GM12878 (cell line): ENCODE measurements at regions of chr5 and their contacts with region 1.

Region 1: DNA sequence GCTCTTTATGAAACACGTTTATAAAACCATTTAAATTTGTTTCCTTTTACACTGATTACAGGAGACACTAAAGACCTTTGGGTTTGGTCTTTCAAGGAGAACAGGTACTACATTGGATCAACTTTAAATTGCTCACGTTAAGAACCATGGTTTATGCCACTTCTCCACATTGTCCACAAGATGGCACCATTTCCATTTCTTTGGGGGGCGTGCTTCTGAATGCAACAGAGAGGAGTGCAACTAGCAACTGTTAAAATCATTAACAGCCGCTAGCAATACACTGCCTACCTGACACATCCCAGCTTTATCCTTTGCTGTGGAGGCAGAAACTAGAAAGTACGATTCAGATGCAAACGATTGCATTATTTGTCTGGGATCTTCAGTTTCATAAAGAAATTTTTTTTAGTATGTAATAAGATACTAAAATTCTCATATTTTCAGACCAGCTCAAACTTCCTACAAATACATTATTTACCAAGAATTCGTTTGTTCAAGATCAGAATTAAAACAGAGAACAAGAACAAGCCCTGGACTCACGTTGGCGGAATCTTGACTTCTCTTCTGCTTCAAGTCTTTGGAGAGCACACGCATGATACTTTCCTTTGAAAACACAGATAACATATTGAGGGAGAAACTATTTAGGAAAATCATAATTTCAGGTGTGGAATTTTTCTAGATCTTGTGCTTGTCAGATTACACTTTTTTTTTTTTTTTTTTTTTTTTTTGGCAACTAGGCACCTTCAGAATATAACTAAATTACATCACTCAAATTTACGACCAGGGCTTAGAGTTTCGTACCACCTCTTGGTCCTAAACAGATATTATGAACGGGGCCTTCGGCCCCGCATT is 702 bp downstream of the CDC20B start:
- DNase-seq: peak; percentile 45
- ATAC-seq: peak; percentile 84
- H3K4me3 ChIP-seq: peak overlapping the region; percentile 69
- H3K27ac ChIP-seq: no peak overlapping the region
- H3K4me1 ChIP-seq: peaks cover 9% of the 10 kb centered on the region
- H3K27me3 ChIP-seq: peaks cover 3 to 22% of the 10 kb centered on the region in 2 experiments; a peak in 3 of 4 replicates
- CTCF ChIP-seq: peak; percentile 60 to 89 (median 82); a peak in 5 of 6 replicates
- EP300 ChIP-seq: no peak
- POLR2A ChIP-seq: no peak
- RAD21 ChIP-seq: peak; percentile 92

Region 2: GRCh38 chr5:55254802-55255201 is 82.5 kb after region 1 on chr5:
- CTCF ChIA-PET with region 1: no interaction called
- POLR2A ChIA-PET with region 1: no interaction called
- RAD21 ChIA-PET with region 1: no interaction called
- SMC1A ChIA-PET with region 1: no interaction called
- in situ Hi-C with region 1: no loop called
- intact Hi-C with region 1: loop called (anchors 5 kb)
- DNase-seq: no peak
- ATAC-seq: no peak
- H3K4me3 ChIP-seq: no peak overlapping the region
- H3K27ac ChIP-seq: no peak overlapping the region
- H3K4me1 ChIP-seq: no peaks in the 10 kb centered on the region
- H3K27me3 ChIP-seq: no peaks in the 10 kb centered on the region
- CTCF ChIP-seq: no peak
- EP300 ChIP-seq: no peak
- POLR2A ChIP-seq: no peak
- RAD21 ChIP-seq: no peak

Region 3: DNA sequence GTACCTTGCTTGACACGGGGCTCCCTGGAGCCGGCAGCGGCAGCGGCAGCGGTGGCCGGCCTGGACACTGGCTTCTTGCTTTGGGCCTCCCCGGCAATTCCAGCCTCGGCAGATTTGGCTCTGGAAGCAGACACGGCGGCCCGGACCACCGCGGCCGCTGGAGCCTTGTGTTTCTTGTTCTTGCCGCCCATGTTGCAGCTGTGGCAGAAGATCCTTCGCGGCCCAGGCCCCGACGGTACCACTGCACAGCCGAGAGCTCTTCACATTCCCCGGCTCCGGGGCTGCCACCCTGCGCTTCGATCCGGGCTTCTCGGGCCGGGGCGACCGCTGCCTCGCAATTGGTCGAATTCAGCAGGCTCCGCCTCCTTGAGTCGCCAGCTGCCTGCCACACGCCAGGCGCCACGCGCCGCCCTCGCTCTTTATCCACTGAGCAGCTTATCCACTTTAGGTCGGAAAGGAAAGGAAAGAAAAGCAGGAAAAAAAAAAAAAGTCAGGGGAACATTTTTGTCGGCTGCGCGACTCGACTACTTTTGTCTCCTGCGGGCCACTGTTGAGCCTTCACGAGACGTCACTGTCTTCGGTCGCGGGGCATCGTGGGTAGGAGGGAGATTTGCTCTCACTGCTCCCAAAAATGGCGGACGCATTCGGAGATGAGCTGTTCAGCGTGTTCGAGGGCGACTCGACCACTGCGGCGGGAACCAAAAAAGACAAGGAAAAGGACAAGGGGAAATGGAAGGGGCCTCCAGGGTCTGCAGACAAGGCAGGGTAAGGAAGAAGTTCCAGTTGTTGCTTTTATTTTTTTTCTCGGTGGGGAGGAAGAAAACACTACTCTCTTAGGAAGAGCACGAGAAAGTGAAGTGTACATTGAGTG is 135.3 kb after region 1 on chr5 and contains the starts of genes DHX29 and MTREX:
- CTCF ChIA-PET with region 1: interaction called, 5 read pairs
- POLR2A ChIA-PET with region 1: no interaction called
- RAD21 ChIA-PET with region 1: no interaction called
- SMC1A ChIA-PET with region 1: no interaction called
- in situ Hi-C with region 1: no loop called
- intact Hi-C with region 1: loop called (anchors 5 kb)
- DNase-seq: peak; percentile 63
- ATAC-seq: peak; percentile 94
- H3K4me3 ChIP-seq: peak within 1 kb of the TSS; percentile 85
- H3K27ac ChIP-seq: peak within 1 kb of the TSS; percentile 80
- H3K4me1 ChIP-seq: no peaks in the 10 kb centered on the region
- H3K27me3 ChIP-seq: no peaks in the 10 kb centered on the region
- CTCF ChIP-seq: no peak
- EP300 ChIP-seq: no peak
- POLR2A ChIP-seq: peak; percentile 98
- RAD21 ChIP-seq: no peak
- polyA plus RNA-seq, gene DHX29: 5.8 to 9.5 TPM
- polyA plus RNA-seq, gene MTREX: 20.1 to 26.1 TPM

Region 4: GRCh38 chr5:55480781-55481180 is 308.5 kb after region 1 on chr5:
- CTCF ChIA-PET with region 1: no interaction called
- POLR2A ChIA-PET with region 1: no interaction called
- RAD21 ChIA-PET with region 1: no interaction called
- SMC1A ChIA-PET with region 1: no interaction called
- in situ Hi-C with region 1: no loop called
- intact Hi-C with region 1: no loop called
- DNase-seq: no peak
- ATAC-seq: no peak
- H3K4me3 ChIP-seq: no peak overlapping the region
- H3K27ac ChIP-seq: no peak overlapping the region
- H3K4me1 ChIP-seq: no peaks in the 10 kb centered on the region
- H3K27me3 ChIP-seq: no peaks in the 10 kb centered on the region
- CTCF ChIP-seq: no peak
- EP300 ChIP-seq: no peak
- POLR2A ChIP-seq: no peak
- RAD21 ChIP-seq: no peak

Region 5: GRCh38 chr5:56190497-56190896 is 1018.2 kb after region 1 on chr5:
- CTCF ChIA-PET with region 1: no interaction called
- POLR2A ChIA-PET with region 1: no interaction called
- RAD21 ChIA-PET with region 1: no interaction called
- SMC1A ChIA-PET with region 1: no interaction called
- in situ Hi-C with region 1: loop called (anchors 10 kb)
- intact Hi-C with region 1: no loop called
- DNase-seq: no peak
- ATAC-seq: no peak
- H3K4me3 ChIP-seq: no peak overlapping the region
- H3K27ac ChIP-seq: no peak overlapping the region
- H3K4me1 ChIP-seq: no peaks in the 10 kb centered on the region
- H3K27me3 ChIP-seq: no peaks in the 10 kb centered on the region
- CTCF ChIP-seq: no peak
- EP300 ChIP-seq: no peak
- POLR2A ChIP-seq: no peak
- RAD21 ChIP-seq: no peak